ENCODE measurements at regions of chr22 and their contacts with region 1.

Region 1: DNA sequence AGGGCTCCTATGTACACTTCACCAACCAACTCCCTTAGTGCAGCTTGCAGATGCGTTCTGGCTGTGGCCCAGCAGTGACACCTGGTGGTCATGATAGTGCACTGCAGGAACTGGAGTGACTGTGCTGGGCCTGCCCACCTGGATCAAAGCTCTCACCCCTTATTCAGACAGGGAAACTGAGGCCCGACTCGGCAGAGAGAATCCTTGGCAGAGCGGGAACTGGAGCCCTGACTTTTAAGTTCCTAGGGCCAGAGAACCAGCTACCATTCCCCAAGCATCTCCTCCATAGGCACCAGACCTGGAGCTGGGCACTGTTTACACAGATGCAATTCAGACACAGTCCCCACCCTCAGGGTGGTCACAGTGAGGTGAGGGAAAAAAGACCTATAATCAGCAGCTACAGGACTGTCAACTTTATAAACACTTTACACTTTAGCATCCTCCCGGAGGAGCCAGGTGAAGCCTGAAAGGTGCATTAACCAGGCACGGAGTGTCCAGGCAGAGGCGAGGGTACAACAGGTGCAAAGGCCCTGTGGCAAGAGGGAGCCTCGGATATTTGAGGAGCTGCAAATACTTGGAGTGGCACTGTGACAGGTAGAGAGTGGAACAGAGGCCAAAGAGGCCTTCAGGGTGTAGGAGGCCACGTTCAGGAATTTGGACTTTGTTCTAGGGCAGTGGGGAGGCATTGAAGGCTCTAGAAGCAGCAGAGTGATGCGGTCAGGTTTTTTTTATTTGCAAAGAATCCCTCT is 22.0 kb downstream of the RHBDD3 start:
- DNase-seq: peak; percentile 79
- ATAC-seq: peak; percentile 86
- H3K4me3 Mint-ChIP-seq: no peak overlapping the region
- H3K27ac Mint-ChIP-seq: no peak overlapping the region
- H3K4me1 Mint-ChIP-seq: peaks cover 2% of the 10 kb centered on the region
- H3K27me3 Mint-ChIP-seq: peaks cover 15% of the 10 kb centered on the region

Region 2: DNA sequence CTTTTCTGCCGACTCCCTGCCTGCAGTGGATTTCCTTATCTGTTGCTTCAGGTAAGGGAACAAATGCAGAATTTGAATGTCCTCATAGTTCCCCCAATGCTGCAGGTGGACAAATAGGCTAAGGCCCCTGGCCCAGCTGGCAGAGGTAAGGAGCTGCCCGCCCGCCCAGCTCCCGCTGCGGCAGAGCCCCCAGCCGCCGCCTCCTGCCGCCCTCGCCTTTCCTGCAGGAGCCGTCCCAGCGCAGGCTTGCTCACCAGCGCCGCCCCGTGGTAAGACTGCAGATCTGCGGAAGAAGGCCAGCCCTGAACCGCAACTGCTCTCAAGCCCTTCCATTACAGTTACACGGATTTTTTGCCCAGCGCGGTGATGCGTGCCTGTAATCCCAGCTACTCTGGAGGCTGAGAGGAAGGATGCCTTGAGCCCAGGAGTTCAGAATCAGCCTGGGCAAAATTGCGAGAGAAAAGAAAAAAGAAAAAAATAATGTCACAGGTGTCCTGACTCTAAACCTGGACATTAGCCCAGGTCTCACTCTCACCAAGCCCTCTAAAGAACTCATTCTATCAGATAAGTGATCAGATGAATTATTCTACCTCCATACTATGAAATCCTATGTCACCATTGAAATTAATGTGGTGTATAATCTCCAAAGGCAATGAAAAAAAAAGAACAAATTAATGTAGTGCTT is 91.3 kb before region 1 on chr22:
- CTCF ChIA-PET with region 1: interaction called, 16 read pairs
- POLR2A ChIA-PET with region 1: no interaction called
- DNase-seq: peak; percentile 79
- ATAC-seq: peak; percentile 90
- H3K4me3 Mint-ChIP-seq: no peak overlapping the region
- H3K27ac Mint-ChIP-seq: no peak overlapping the region
- H3K4me1 Mint-ChIP-seq: peaks cover 19% of the 10 kb centered on the region
- H3K27me3 Mint-ChIP-seq: peaks cover 21% of the 10 kb centered on the region

Region 3: DNA sequence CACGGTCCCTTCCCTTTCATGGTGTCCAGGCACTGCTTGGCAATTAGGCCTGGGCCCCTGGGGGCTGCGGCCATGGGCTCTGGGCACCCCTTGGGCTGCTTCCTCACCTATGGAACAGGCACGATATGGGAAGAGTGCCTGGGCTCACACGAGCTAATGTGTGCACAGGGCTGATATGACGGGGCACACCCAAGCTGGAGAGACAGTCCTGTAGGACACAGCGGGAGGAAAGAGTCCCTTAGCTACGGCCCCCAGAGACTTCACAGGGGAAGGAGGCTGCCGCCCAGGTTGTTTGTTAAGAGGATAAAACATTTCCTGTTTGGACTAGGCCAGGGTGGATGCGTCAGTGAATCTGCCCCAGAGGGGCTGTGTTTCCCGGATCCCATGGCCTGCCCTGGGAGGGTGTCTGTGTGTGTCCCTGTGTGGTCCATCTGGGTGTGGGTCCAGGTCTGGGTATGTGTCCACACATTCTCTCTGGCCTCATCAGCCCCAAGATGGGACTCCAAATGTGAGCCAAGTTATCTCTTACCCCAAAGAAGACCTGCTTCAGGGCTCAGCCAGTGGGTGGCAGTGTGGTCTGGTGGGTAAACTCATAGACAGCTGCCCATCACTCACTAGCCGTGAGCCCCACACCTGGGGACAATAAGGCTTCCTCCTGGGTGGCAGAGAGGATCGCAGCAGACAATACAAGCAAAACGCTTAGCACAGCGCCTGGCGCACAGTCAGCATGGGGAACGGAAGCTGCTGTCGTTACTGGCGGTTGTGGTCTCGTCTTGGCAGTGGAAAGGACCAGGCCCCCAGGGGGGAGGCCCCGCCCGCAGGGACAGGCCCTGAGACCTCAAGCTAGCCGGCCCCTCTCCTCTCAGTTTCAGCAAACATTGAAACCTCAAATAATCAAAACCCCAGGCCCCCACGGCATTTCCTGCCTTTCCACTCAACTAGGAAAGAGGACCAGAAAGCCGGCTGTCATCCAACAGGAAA is 43.3 kb before region 1 on chr22:
- CTCF ChIA-PET with region 1: interaction called, 21 read pairs
- POLR2A ChIA-PET with region 1: no interaction called
- DNase-seq: peak; percentile 82
- ATAC-seq: peak; percentile 81
- H3K4me3 Mint-ChIP-seq: peak overlapping the region; percentile 48
- H3K27ac Mint-ChIP-seq: peak overlapping the region; percentile 89
- H3K4me1 Mint-ChIP-seq: peaks cover 30% of the 10 kb centered on the region
- H3K27me3 Mint-ChIP-seq: peaks cover 53% of the 10 kb centered on the region

Region 4: GRCh38 chr22:29231971-29232959 is 13.5 kb before region 1 on chr22:
- CTCF ChIA-PET with region 1: interaction called, 15 read pairs
- POLR2A ChIA-PET with region 1: no interaction called
- DNase-seq: no peak
- ATAC-seq: no peak
- H3K4me3 Mint-ChIP-seq: no peak overlapping the region
- H3K27ac Mint-ChIP-seq: no peak overlapping the region
- H3K4me1 Mint-ChIP-seq: no peaks in the 10 kb centered on the region
- H3K27me3 Mint-ChIP-seq: peaks cover 7% of the 10 kb centered on the region